Posterior vena cava (tissue), 2 donors: ENCODE measurements at regions of chrX and their contacts with region 1.

Region 1: GRCh38 chrX:73863268-73863667 is 300.3 kb downstream of the CHIC1 start:
- DNase-seq: no peak

Region 2: GRCh38 chrX:74138943-74139342 is 275.7 kb after region 1 on chrX:
- intact Hi-C with region 1: loop called (anchors 5 kb)
- DNase-seq: no peak